H1 (cell line): ENCODE measurements at regions of chr20 and their contacts with region 1.

Region 1: DNA sequence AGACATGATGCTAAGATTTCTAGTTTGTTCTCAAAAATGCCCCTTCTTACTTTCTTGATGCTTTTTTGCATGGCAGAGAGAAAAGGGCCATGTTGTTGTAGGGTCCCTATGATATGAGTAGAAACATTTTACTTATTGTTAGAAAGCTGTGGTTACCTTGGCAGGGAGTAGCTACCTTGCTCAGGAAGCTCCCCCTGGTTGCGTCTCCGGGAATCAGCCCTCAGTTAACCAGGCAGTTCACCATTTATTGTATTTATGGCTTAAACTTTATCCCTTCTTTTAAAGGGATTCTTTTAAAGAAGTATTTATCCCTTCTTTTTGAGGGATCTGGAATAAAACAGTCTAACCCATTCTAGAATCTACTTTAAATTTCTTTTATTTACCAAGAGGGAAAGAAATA is 113.9 kb upstream of the PROKR2 start:
- DNase-seq: no peak
- H3K4me3 ChIP-seq: no peak overlapping the region
- H3K27ac ChIP-seq: no peak overlapping the region
- H3K4me1 ChIP-seq: no peaks in the 10 kb centered on the region
- H3K27me3 ChIP-seq: peaks cover 0 to 2% (median 0%) of the 10 kb centered on the region in 4 experiments; a peak in 1 of 7 replicates
- CTCF ChIP-seq: peak; percentile 39 to 49 (median 40)
- EP300 ChIP-seq: no peak
- POLR2A ChIP-seq: no peak
- RAD21 ChIP-seq: peak; percentile 34 to 40; a peak in 3 of 4 replicates

Region 2: DNA sequence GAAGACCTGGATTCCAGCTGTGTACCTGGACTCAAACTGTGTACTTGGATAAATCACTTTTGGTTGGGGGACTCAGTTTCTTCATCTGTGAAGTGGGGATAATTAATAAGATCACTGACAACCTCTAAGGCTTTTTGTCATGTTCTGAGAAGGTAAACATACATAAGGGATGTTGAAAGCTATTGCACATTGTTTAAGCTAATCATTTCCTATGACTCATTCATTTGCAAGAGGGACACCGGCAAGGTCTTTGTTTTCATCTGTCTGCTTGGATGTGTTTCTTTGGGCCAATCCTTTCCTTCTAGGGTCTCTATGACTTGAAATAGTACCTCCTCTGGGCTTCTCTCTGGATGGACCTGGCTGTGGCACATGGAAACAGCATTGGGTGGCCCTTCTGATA is 120.7 kb before region 1 on chr20:
- CTCF ChIA-PET with region 1: interaction called, 10 read pairs
- POLR2A ChIA-PET with region 1: no interaction called
- DNase-seq: no peak
- H3K4me3 ChIP-seq: no peak overlapping the region
- H3K27ac ChIP-seq: no peak overlapping the region
- H3K4me1 ChIP-seq: no peaks in the 10 kb centered on the region; a peak in 1 of 7 replicates
- H3K27me3 ChIP-seq: peaks cover 4 to 13% (median 10%) of the 10 kb centered on the region in 4 experiments
- CTCF ChIP-seq: no peak
- EP300 ChIP-seq: no peak
- POLR2A ChIP-seq: no peak
- RAD21 ChIP-seq: no peak

Region 3: DNA sequence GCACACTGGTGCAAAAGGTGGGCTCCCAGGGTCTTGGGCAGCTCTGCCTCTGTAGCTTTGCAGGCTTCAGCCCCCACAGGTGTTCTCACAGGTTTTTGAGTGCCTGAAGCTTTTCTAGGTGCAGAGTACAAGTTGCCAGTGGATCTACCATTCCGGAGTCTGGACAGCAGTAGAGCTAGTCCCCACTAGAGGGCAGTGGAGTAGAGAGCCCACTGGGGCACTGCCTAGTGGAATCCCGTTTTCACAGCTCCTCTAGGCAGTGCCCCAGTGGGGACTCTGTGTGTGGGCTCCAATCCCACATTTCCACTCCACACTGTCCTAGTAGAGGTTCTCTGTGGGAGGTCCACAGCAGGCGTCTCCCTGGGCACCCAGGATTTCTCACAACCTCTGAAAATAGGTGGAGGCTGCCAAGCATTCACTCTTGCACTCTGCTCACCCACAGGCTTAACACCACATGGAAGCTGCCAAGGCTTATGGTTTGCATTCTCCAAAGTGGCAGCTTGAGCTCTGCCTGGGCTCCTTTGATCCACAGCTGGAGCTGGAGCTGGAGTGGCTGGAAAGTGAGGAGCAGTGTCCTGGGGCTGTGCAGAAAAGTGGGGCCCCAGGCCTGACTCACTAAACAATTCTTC is 27.7 kb before region 1 on chr20:
- CTCF ChIA-PET with region 1: interaction called, 43 read pairs
- POLR2A ChIA-PET with region 1: no interaction called
- DNase-seq: peak in 1 of 2 experiments; percentile 74
- H3K4me3 ChIP-seq: no peak overlapping the region
- H3K27ac ChIP-seq: no peak overlapping the region
- H3K4me1 ChIP-seq: no peaks in the 10 kb centered on the region
- H3K27me3 ChIP-seq: no peaks in the 10 kb centered on the region
- CTCF ChIP-seq: peak; percentile 74 to 78 (median 75)
- EP300 ChIP-seq: no peak
- POLR2A ChIP-seq: no peak
- RAD21 ChIP-seq: peak; percentile 62 to 73